HCT116 (cell line): ENCODE measurements at regions of chr12 and their contacts with region 1.

Region 1: DNA sequence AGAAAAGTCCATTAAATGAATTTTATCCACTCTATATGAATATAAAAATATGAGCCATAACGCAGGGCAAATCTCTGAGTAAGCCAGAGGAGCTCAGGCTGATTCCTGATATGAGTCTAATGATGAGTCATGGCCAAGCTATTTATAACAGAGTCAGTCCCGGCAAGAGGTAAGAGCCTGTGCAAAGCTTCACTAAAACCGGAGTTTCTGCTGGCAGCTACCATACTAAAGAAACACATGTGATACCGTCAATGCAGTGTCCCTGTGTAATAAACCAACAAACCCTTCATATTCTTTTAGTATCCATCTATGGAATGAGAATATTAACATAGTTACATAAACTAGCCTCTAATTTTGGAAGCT is 319.4 kb downstream of the KCNC2 start:
- DNase-seq: peak; percentile 73
- ATAC-seq: peak; percentile 97
- H3K4me3 ChIP-seq: peak overlapping the region in 1 of 2 experiments; percentile 36; a peak in 3 of 4 replicates
- H3K27ac ChIP-seq: peak overlapping the region; percentile 53; the same call in 1 of the 2 replicates
- H3K4me1 ChIP-seq: peaks cover 16 to 28% of the 10 kb centered on the region in 2 experiments
- H3K27me3 ChIP-seq: no peaks in the 10 kb centered on the region
- CTCF ChIP-seq: no peak
- POLR2A ChIP-seq: no peak
- RAD21 ChIP-seq: no peak

Region 2: DNA sequence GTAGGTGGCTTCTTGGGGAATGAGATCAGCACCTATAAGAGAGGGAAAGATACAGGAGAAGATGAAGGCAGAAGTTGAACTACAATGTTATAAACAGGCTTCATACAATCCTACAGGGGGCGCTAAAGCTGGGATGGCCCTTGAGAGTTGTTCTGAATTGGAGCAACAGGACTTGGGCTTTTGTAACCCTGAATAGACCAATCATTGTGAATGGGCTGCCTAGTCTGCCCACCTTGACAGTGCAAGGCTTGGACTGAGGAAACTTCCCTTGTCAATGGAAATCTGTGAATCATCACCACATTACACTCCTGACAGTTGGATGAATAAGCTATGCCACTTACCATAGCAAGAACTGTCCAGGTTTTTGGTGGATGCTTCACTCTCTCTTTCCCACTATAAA is 13.3 kb after region 1 on chr12:
- CTCF ChIA-PET with region 1: interaction called, 11 read pairs
- POLR2A ChIA-PET with region 1: no interaction called
- RAD21 ChIA-PET with region 1: no interaction called
- intact Hi-C with region 1: no loop called
- DNase-seq: peak; percentile 13
- ATAC-seq: peak; percentile 44; the same call in 1 of the 2 replicates
- H3K4me3 ChIP-seq: no peak overlapping the region
- H3K27ac ChIP-seq: no peak overlapping the region
- H3K4me1 ChIP-seq: no peaks in the 10 kb centered on the region
- H3K27me3 ChIP-seq: no peaks in the 10 kb centered on the region
- CTCF ChIP-seq: peak; percentile 7 to 68 (median 62); a peak in 4 of 6 replicates
- POLR2A ChIP-seq: no peak
- RAD21 ChIP-seq: peak; percentile 11; the same call in 1 of the 2 replicates

Region 3: GRCh38 chr12:74922642-74923041 is 32.4 kb after region 1 on chr12:
- CTCF ChIA-PET with region 1: no interaction called
- POLR2A ChIA-PET with region 1: no interaction called
- RAD21 ChIA-PET with region 1: no interaction called
- intact Hi-C with region 1: no loop called
- DNase-seq: no peak
- ATAC-seq: no peak
- H3K4me3 ChIP-seq: no peak overlapping the region
- H3K27ac ChIP-seq: no peak overlapping the region
- H3K4me1 ChIP-seq: no peaks in the 10 kb centered on the region
- H3K27me3 ChIP-seq: no peaks in the 10 kb centered on the region
- CTCF ChIP-seq: no peak
- POLR2A ChIP-seq: no peak
- RAD21 ChIP-seq: no peak

Region 4: GRCh38 chr12:75260312-75260711 is 370.1 kb after region 1 on chr12:
- CTCF ChIA-PET with region 1: no interaction called
- POLR2A ChIA-PET with region 1: no interaction called
- RAD21 ChIA-PET with region 1: no interaction called
- intact Hi-C with region 1: no loop called
- DNase-seq: no peak
- ATAC-seq: no peak
- H3K4me3 ChIP-seq: no peak overlapping the region
- H3K27ac ChIP-seq: no peak overlapping the region
- H3K4me1 ChIP-seq: no peaks in the 10 kb centered on the region
- H3K27me3 ChIP-seq: no peaks in the 10 kb centered on the region
- CTCF ChIP-seq: no peak
- POLR2A ChIP-seq: no peak
- RAD21 ChIP-seq: no peak